Naive thymus-derived CD8-positive, alpha-beta T cell (primary cell): ENCODE measurements at regions of chr4 and their contacts with region 1.

Region 1: GRCh38 chr4:38141808-38142500 is 181.8 kb downstream of the PTTG2 start:
- DNase-seq: no peak
- ATAC-seq: no peak
- H3K4me3 Mint-ChIP-seq: no peak overlapping the region
- H3K27ac Mint-ChIP-seq: peak overlapping the region in 2 of 10 donors; percentile 30 to 33
- H3K4me1 Mint-ChIP-seq: peaks cover 0 to 7% (median 3%) of the 10 kb centered on the region in 4 donors
- H3K27me3 Mint-ChIP-seq: no peaks in the 10 kb centered on the region

Region 2: GRCh38 chr4:38109370-38109769 is 32.6 kb before region 1 on chr4:
- POLR2A ChIA-PET with region 1: interaction called, 10 read pairs
- DNase-seq: no peak
- ATAC-seq: no peak
- H3K4me3 Mint-ChIP-seq: no peak overlapping the region
- H3K27ac Mint-ChIP-seq: no peak overlapping the region
- H3K4me1 Mint-ChIP-seq: peaks cover 0 to 7% (median 0%) of the 10 kb centered on the region in 4 donors
- H3K27me3 Mint-ChIP-seq: no peaks in the 10 kb centered on the region